Activated CD4-positive, alpha-beta memory T cell treated with anti-CD3 and anti-CD28 coated beads, Interleukin-2, amount 10 ng/mL, durations not matched to agents 7 days and 5 days (primary cell): ENCODE measurements at regions of chr15 and their contacts with region 1.

Region 1: DNA sequence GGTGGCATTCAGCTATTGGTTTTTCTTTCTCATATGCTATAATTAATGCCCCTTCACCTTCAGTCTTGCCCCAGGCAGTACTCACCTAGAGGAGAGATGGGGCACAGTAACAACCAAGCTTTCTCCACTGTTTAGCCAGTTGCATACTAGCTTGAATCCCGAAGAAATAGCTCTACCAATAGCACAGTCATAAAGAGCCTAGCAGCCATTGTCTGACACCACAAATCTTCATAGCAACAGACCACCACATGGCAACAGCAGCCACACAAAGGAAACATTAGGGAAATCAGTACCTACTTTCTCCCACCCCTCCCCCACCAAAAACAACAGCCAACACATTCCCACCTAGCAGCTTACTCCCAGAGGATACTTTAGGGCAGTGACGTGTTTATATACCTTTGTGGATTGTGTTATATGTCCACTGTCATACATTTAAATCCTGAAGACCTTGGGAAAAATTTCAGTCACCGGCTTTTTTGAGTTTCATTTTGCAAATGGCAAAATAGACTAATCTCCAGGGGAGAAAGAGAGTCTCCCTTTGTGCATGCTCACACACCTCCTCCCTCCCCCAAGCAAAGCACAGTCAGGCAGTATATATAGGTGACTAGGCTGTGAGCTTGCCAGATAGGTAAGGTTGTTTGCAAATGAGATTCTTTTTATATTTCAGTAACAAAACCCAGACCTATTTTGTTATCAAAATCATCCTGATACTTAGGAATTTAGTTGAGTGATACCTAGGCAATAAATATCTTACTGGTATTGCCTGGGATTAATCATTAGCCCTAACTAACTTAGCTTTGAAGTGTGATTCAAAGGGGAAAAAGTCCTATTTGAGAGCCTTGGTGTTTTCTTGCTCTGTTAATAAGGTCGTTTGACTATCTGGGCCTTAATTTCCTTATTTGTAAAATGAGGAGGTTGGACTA is 140.6 kb downstream of the RBPMS2 start:
- DNase-seq: peak; percentile 54
- H3K4me3 Mint-ChIP-seq: peak overlapping the region; percentile 9
- H3K27ac Mint-ChIP-seq: peak overlapping the region; percentile 69
- H3K4me1 Mint-ChIP-seq: peaks cover 42% of the 10 kb centered on the region
- H3K27me3 Mint-ChIP-seq: no peaks in the 10 kb centered on the region

Region 2: DNA sequence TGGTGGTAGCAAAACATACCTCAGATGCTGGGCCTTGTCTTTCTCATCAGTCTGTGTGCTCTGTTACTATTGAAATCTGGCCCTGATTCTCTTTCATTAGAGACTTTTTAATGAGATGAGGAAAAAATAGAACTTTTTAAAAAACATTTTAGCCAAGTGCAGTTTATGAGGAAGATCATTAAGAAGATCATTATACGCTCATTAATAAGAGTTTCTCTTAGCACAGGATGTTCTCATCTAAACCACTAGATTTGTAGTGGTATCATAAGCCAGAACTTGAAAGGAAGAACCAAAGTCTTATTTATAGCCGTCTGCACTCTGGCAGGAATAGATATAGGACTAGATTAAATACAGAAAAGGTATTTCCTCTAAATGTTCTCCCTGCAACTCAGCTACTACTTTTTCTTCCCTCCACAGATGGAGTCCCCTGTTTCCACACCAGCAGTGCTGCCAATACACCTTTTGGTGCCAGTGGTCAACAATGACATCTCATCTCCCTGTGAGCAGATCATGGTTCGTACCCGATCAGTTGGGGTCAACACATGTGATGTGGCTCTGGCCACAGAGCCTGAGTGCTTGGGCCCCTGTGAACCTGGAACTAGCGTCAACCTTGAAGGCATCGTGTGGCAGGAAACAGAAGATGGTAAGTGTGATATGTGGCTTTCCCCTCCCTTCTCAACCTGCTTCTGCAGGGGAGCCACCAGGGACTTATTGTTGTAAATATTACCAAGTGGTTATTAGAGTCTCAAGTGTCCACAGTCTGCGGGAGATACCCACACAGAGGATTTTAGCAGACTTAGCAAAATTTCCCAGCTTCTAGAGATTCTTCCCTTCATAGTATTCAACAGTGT is 12.2 kb before region 1 on chr15:
- CTCF ChIA-PET with region 1: interaction called, 4 read pairs
- POLR2A ChIA-PET with region 1: interaction called, 26 read pairs
- DNase-seq: peak; percentile 70
- H3K4me3 Mint-ChIP-seq: peak overlapping the region; percentile 63
- H3K27ac Mint-ChIP-seq: peak overlapping the region; percentile 93
- H3K4me1 Mint-ChIP-seq: peaks cover 79% of the 10 kb centered on the region
- H3K27me3 Mint-ChIP-seq: no peaks in the 10 kb centered on the region

Region 3: DNA sequence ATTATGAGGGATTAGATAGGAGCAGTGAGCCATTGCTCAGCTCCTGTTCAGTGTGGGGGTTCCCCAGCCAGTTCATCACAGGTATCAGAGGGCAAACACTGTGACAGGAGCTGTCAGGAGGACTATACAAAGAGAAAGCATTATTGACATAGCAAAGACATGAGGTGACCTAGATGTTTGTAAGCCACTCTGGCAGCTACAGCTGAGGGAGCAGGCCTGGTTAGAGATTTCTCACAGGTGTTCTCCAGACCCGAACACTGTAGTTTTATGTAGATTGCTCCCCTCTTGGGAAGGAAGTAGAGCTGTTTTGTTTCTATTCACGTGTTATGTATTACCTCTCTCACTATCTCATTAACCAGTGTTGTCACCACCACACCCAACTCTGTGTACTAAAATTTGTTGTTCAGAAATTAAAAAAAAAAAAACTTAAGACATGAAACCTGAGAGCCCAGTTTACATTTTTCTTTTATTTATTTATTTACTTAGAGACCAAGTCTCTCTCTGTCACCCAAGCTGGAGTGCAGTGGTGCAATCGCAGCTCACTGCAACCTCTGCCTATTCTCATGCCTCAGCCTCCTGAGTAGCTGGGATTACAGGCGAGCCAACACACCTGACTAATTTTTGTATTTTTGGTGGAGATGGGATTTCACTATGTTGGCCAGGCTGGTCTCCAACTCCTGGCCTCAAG is 16.9 kb after region 1 on chr15:
- CTCF ChIA-PET with region 1: interaction called, 20 read pairs
- POLR2A ChIA-PET with region 1: interaction called, 29 read pairs
- DNase-seq: peak; percentile 29
- H3K4me3 Mint-ChIP-seq: no peak overlapping the region
- H3K27ac Mint-ChIP-seq: peak overlapping the region; percentile 61
- H3K4me1 Mint-ChIP-seq: peaks cover 19% of the 10 kb centered on the region
- H3K27me3 Mint-ChIP-seq: no peaks in the 10 kb centered on the region

Region 4: DNA sequence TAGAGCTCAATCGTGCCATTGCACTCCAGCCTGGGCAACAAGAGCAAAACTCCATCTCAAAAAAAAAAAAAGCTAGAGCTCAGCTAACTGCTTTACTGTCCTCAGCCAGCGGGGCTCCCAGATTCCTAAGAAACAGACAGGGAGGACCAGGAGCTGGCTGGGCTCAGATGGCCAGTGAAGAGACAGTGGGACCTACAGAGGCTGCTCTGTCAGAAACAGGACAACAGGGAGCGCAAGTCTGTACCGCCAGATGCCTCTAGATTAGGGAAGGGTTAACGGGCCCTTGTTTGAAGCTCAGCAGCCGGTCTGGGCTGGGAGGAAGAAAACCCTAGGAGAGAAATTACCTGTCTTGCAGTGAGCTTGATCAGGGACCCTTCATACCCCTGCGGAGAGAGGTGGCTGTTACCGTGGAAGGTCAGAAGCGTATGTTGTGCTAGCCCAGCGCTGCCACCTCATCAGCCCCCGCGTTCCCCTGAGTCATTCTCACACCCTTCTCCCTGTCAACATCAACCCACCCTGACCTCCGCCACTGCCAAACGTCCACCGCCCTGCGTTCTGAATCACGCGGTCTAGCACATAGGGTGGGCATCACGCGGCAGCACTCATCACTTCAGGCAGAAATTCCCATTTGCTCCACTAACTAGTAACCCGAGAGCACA is 115.3 kb after region 1 on chr15:
- CTCF ChIA-PET with region 1: no interaction called
- POLR2A ChIA-PET with region 1: no interaction called
- DNase-seq: no peak
- H3K4me3 Mint-ChIP-seq: no peak overlapping the region
- H3K27ac Mint-ChIP-seq: no peak overlapping the region
- H3K4me1 Mint-ChIP-seq: no peaks in the 10 kb centered on the region
- H3K27me3 Mint-ChIP-seq: peaks cover 19% of the 10 kb centered on the region

Region 5: DNA sequence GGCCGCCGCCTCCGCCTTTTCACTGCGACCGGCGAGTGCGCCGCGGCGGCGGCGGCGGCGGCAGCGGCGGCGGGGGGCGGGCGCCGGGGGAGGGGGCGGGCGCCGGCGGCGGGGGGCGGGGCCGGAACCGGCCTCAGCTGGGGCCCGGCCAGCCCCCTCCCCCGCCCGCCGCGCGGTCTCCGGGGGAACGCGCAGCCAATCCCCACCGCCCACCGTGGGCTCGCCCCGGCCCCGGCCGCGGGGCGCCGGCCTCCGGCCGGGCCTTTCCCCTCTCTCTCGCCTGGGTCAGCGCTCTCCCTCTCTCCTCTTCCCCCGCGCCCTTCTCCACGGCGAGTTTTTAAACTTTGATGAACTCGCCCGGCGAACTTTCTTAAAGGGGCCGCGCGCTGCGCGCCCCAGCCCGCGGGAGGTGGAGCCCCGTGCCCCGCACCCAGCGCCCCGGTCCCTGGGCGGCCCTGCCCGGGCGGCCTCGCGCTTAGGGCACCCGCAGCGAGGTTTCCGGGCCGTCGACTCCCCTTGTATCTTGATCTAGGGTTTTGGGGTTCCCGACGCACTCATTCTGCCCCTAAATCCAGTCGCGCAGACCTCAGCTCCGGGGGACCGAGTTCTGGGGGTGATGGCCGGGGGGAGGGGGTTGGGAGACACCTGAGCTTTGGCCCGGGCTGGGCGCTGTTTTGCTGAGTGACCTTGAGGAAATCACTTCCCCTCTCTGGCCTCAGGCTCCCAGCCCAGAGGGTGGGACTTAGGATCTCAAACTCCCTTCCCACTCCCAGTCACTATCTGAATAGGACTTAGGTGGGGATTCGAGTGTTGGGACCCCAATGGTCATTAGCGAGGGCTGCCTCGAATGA is 140.9 kb after region 1 on chr15 and contains the start of gene RBPMS2:
- CTCF ChIA-PET with region 1: no interaction called
- POLR2A ChIA-PET with region 1: no interaction called
- DNase-seq: no peak
- H3K4me3 Mint-ChIP-seq: peak within 1 kb of the TSS; percentile 62
- H3K27ac Mint-ChIP-seq: no peak within 1 kb of the TSS
- H3K4me1 Mint-ChIP-seq: peaks cover 7% of the 10 kb centered on the region
- H3K27me3 Mint-ChIP-seq: peaks cover 59% of the 10 kb centered on the region
- total RNA-seq, gene RBPMS2: not detected